ENCODE measurements at regions of chr1 and their contacts with region 1.

Region 1: DNA sequence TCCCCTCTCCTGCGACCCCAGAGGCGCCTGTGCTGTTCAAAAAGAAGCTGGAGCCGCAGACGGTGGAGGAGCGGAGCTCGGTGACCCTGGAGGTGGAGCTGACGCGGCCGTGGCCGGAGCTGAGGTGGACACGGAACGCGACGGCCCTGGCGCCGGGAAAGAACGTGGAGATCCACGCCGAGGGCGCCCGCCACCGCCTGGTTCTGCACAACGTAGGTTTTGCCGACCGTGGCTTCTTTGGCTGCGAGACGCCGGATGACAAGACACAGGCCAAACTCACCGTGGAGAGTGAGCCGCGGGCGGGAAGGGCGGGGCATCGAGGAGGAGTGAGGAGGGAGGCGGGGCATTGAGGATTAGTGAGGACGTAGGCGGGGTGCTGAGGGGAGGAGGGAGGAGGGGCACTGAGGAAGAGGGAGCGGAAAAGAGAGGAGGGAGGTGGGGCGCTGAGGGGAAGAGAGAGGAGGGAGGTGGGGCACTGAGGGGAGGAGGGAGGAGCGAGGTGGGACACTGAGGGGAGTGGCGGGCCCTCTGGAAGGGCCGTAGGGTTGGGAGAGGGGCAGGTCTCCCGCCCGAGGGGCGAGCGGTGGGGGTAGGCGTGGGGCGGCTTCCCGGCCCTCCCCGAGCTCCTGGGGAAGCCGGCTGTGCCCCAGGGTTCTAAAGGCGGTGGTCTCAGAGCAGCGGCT is 68.0 kb downstream of the OBSCN start:
- DNase-seq: peak; percentile 93 to 95
- ATAC-seq: peak; percentile 89
- H3K4me3 ChIP-seq: peak overlapping the region; percentile 45 to 68
- H3K27ac ChIP-seq: no peak overlapping the region
- H3K4me1 ChIP-seq: no peaks in the 10 kb centered on the region
- H3K27me3 ChIP-seq: no peaks in the 10 kb centered on the region

Region 2: DNA sequence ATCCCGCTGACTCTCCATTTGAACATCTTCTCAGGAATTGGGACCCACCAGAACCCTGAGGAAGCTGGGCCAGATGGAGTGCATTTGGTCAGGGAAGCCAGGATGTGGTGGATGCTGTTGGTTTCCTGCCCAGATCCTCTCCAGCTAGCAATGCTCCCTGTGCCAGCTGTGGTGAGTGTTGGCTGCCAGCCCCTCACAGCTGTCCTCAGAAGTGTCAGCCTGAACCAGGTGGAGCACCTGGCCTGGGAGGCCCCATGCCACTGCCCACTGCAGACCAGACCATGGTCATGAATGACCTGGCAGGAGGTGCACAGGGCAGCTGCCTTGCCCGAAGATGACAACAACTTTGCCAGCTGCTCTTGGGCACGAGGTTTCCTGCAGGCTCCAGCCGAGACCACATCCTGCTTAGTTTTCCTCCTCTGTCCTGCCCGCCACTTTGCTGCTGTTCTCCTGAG is 406.0 kb before region 1 on chr1:
- intact Hi-C with region 1: no loop called
- DNase-seq: no peak
- ATAC-seq: no peak
- H3K4me3 ChIP-seq: no peak overlapping the region
- H3K27ac ChIP-seq: no peak overlapping the region
- H3K4me1 ChIP-seq: no peaks in the 10 kb centered on the region
- H3K27me3 ChIP-seq: no peaks in the 10 kb centered on the region

Region 3: GRCh38 chr1:228378090-228378872 is 102.4 kb after region 1 on chr1:
- intact Hi-C with region 1: loop called in 1 of 2 experiments (anchors 10 kb)
- DNase-seq: peak; percentile 90 to 93
- ATAC-seq: peak; percentile 82
- H3K4me3 ChIP-seq: peak overlapping the region in 1 of 2 donors; percentile 17
- H3K27ac ChIP-seq: no peak overlapping the region
- H3K4me1 ChIP-seq: no peaks in the 10 kb centered on the region
- H3K27me3 ChIP-seq: no peaks in the 10 kb centered on the region